Activated CD4-positive, alpha-beta T cell treated with anti-CD3 and anti-CD28 coated beads for 36 hours (primary cell): ENCODE measurements at regions of chr11 and their contacts with region 1.

Region 1: DNA sequence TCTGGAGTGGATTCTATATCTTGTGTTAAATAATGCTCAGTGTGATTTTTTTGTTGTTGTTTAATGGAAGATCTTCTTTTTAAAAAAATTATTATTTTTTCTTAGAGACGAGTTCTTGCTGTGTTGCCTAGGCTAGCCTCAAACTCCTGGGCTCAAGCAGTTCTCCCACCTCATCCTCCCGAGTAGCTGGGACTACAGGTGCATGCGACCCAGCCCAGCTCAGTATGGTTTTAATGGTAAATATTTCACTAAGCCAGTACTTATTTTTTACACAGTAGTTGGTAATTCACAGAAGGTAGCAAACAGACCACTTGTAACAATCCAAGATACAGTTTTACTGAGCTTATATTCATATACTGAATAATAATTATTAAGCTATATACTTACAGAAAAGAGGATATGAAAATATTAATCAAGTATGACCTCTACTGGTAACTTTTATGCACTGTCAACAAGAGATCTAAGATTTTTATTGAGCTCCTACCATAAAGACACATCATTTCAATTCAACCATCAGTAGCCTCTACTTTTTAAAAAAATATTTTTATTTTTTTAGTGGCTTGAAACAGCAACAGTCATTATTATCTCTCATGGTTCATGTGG is 6.1 kb upstream of the CD59 start:
- DNase-seq: no peak
- ATAC-seq: no peak
- H3K4me3 Mint-ChIP-seq: no peak overlapping the region
- H3K27ac Mint-ChIP-seq: no peak overlapping the region
- H3K4me1 Mint-ChIP-seq: peaks cover 5% of the 10 kb centered on the region
- H3K27me3 Mint-ChIP-seq: peaks cover 5% of the 10 kb centered on the region

Region 2: DNA sequence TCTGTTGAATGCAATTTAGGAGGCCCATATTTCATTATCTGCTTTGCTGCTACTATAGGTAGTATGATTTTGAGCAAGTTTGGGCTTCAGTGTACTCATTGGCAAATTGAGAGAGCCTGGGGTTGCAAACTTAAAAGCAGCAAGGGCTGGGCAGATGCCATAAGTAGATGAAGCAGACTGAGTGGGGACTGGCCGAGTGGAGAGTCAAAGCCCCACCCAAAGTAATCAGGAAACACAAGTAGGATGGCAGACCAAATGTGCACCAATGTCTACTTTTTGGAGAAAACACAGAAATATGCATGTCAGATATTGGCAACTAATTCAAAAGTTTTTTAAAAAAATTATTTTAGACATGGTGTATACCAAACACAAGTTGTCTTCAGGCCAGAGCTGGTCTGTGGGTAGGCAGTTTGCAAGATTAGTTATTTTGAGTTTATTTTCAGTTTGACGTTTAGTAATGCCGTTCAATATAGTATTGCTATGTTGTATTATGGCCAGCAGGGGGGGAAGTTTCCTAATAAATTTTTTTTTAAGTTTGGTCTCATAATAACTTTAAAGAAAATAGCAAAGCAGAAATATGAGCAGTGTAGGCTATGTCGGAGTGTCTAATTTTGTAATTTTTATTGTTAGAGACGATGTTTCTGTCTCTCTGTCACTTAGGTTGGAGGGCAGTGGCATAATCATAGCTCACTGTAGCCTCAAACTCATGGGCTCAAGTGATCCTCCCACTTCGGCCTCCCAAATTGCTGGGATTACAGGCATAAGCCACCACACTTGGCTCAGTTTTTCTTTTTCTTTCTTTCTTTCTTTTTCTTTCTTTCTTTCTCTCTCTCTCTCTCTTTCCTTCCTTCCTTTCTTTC is 380.1 kb before region 1 on chr11:
- CTCF ChIA-PET with region 1: interaction called, 17 read pairs
- POLR2A ChIA-PET with region 1: no interaction called
- intact Hi-C with region 1: loop called (anchors 1 to 2 kb)
- DNase-seq: no peak
- ATAC-seq: peak; percentile 47
- H3K4me3 Mint-ChIP-seq: no peak overlapping the region
- H3K27ac Mint-ChIP-seq: no peak overlapping the region
- H3K4me1 Mint-ChIP-seq: no peaks in the 10 kb centered on the region
- H3K27me3 Mint-ChIP-seq: peaks cover 8% of the 10 kb centered on the region

Region 3: DNA sequence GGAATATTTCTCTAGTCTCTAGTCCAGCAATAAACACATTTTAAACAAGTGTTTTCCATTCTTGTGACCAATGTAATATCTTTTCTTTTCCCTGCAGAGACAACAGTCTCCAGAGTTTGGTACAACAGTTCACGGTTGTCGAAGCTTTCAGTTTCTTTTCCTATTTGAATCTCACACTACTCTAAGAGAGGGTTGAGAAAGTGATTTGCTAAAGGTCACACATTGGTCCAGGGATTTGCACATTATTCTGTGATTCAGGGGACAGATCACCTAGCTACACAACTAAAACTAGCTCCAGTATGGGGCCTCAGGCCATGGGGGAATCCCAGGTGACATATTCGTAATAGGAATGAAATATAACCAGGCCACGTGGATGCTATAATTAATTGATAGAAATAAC is 352.7 kb before region 1 on chr11:
- CTCF ChIA-PET with region 1: no interaction called
- POLR2A ChIA-PET with region 1: no interaction called
- intact Hi-C with region 1: no loop called
- DNase-seq: no peak
- ATAC-seq: no peak
- H3K4me3 Mint-ChIP-seq: no peak overlapping the region
- H3K27ac Mint-ChIP-seq: no peak overlapping the region
- H3K4me1 Mint-ChIP-seq: no peaks in the 10 kb centered on the region
- H3K27me3 Mint-ChIP-seq: peaks cover 9% of the 10 kb centered on the region

Region 4: GRCh38 chr11:33542921-33543320 is 199.4 kb before region 1 on chr11:
- CTCF ChIA-PET with region 1: interaction called, 7 read pairs
- POLR2A ChIA-PET with region 1: no interaction called
- intact Hi-C with region 1: loop called in 1 of 2 experiments (anchors 2 kb)
- DNase-seq: peak; percentile 60
- ATAC-seq: no peak
- H3K4me3 Mint-ChIP-seq: no peak overlapping the region
- H3K27ac Mint-ChIP-seq: no peak overlapping the region
- H3K4me1 Mint-ChIP-seq: no peaks in the 10 kb centered on the region
- H3K27me3 Mint-ChIP-seq: peaks cover 27% of the 10 kb centered on the region

Region 5: GRCh38 chr11:33564856-33565453 is 177.4 kb before region 1 on chr11:
- CTCF ChIA-PET with region 1: no interaction called
- POLR2A ChIA-PET with region 1: no interaction called
- intact Hi-C with region 1: no loop called
- DNase-seq: no peak
- ATAC-seq: no peak
- H3K4me3 Mint-ChIP-seq: no peak overlapping the region
- H3K27ac Mint-ChIP-seq: no peak overlapping the region
- H3K4me1 Mint-ChIP-seq: no peaks in the 10 kb centered on the region
- H3K27me3 Mint-ChIP-seq: peaks cover 8% of the 10 kb centered on the region

Region 6: GRCh38 chr11:33716236-33716635 is 26.1 kb before region 1 on chr11:
- CTCF ChIA-PET with region 1: interaction called, 66 read pairs
- POLR2A ChIA-PET with region 1: no interaction called
- intact Hi-C with region 1: loop called (anchors 1 kb)
- DNase-seq: no peak
- ATAC-seq: peak; percentile 75
- H3K4me3 Mint-ChIP-seq: no peak overlapping the region
- H3K27ac Mint-ChIP-seq: no peak overlapping the region
- H3K4me1 Mint-ChIP-seq: peaks cover under 1% of the 10 kb centered on the region
- H3K27me3 Mint-ChIP-seq: no peaks in the 10 kb centered on the region

Region 7: GRCh38 chr11:33753304-33753967 is 11.1 kb after region 1 on chr11:
- CTCF ChIA-PET with region 1: interaction called, 10 read pairs
- POLR2A ChIA-PET with region 1: no interaction called
- intact Hi-C with region 1: no loop called
- DNase-seq: no peak
- ATAC-seq: peak; percentile 95
- H3K4me3 Mint-ChIP-seq: no peak overlapping the region
- H3K27ac Mint-ChIP-seq: peak overlapping the region; percentile 11
- H3K4me1 Mint-ChIP-seq: peaks cover 8% of the 10 kb centered on the region
- H3K27me3 Mint-ChIP-seq: no peaks in the 10 kb centered on the region